ENCODE measurements at regions of chr11 and their contacts with region 1.

Region 1: DNA sequence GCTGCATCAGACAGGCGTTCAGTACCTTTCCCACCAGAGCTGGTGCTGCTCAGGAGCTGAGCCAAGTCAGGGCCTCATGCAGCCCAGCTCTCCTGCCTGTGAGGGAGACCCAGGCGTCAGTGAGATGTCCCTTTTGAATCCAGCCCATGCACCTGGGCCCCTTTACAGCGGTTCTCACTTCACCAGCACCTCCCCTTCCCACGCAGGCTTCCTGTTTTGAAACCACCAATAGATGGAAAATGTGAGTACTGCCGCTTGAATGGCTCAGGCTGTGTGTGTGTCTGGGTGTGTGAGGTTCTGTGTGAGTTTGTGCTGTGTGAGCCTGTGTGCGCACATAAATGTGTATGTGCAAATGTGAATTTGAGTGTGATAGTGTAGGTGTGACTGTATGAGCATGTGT is 88.4 kb downstream of the UBASH3B start:
- DNase-seq: peak; percentile 47 to 80 (median 61)
- ATAC-seq: peak; percentile 75 to 80 (median 78)
- H3K4me3 ChIP-seq: peak overlapping the region; percentile 35 to 58
- H3K4me3 Mint-ChIP-seq: no peak overlapping the region
- H3K27ac ChIP-seq: peak overlapping the region; percentile 84
- H3K27ac Mint-ChIP-seq: no peak overlapping the region
- H3K4me1 ChIP-seq: peaks cover 54 to 74% of the 10 kb centered on the region in 2 experiments
- H3K4me1 Mint-ChIP-seq: peaks cover 5 to 27% (median 25%) of the 10 kb centered on the region in 3 donors
- H3K27me3 ChIP-seq: no peaks in the 10 kb centered on the region
- H3K27me3 Mint-ChIP-seq: no peaks in the 10 kb centered on the region

Region 2: GRCh38 chr11:121119440-121119839 is 1624.5 kb before region 1 on chr11:
- CTCF ChIA-PET with region 1: no interaction called
- POLR2A ChIA-PET with region 1: no interaction called
- DNase-seq: no peak
- ATAC-seq: no peak
- H3K4me3 ChIP-seq: no peak overlapping the region
- H3K4me3 Mint-ChIP-seq: no peak overlapping the region
- H3K27ac ChIP-seq: no peak overlapping the region
- H3K27ac Mint-ChIP-seq: no peak overlapping the region
- H3K4me1 ChIP-seq: no peaks in the 10 kb centered on the region
- H3K4me1 Mint-ChIP-seq: no peaks in the 10 kb centered on the region
- H3K27me3 ChIP-seq: peaks cover 0 to 4% of the 10 kb centered on the region in 2 experiments
- H3K27me3 Mint-ChIP-seq: no peaks in the 10 kb centered on the region

Region 3: GRCh38 chr11:122655527-122656072 is 88.3 kb before region 1 on chr11 and contains the start of gene UBASH3B:
- CTCF ChIA-PET with region 1: interaction called in 1 of 2 experiments, 10 read pairs
- POLR2A ChIA-PET with region 1: interaction called in 1 of 2 experiments, 6 read pairs
- DNase-seq: peak in 34 of 35 experiments; percentile 28 to 66 (median 48)
- ATAC-seq: peak; percentile 77 to 80 (median 78)
- H3K4me3 ChIP-seq: peak within 1 kb of the TSS; percentile 85
- H3K4me3 Mint-ChIP-seq: peak within 1 kb of the TSS; percentile 93 to 97 (median 97)
- H3K27ac ChIP-seq: peak within 1 kb of the TSS; percentile 46
- H3K27ac Mint-ChIP-seq: peak within 1 kb of the TSS; percentile 92 to 94
- H3K4me1 ChIP-seq: peaks cover 4 to 35% of the 10 kb centered on the region in 2 experiments
- H3K4me1 Mint-ChIP-seq: peaks cover 44 to 52% (median 50%) of the 10 kb centered on the region in 3 donors
- H3K27me3 ChIP-seq: peaks cover 0 to 8% of the 10 kb centered on the region in 2 experiments
- H3K27me3 Mint-ChIP-seq: no peaks in the 10 kb centered on the region
- total RNA-seq, gene UBASH3B: 29.7 to 44.0 (median 36.8) TPM

Measured in T-cell (primary cell).